Left cardiac atrium (tissue), 4 donors: ENCODE measurements at regions of chr10 and their contacts with region 1.

Region 1: GRCh38 chr10:88932539-88933256 is 19.9 kb downstream of the ACTA2 start:
- DNase-seq: peak; percentile 40
- ATAC-seq: peak; percentile 72 to 78

Region 2: DNA sequence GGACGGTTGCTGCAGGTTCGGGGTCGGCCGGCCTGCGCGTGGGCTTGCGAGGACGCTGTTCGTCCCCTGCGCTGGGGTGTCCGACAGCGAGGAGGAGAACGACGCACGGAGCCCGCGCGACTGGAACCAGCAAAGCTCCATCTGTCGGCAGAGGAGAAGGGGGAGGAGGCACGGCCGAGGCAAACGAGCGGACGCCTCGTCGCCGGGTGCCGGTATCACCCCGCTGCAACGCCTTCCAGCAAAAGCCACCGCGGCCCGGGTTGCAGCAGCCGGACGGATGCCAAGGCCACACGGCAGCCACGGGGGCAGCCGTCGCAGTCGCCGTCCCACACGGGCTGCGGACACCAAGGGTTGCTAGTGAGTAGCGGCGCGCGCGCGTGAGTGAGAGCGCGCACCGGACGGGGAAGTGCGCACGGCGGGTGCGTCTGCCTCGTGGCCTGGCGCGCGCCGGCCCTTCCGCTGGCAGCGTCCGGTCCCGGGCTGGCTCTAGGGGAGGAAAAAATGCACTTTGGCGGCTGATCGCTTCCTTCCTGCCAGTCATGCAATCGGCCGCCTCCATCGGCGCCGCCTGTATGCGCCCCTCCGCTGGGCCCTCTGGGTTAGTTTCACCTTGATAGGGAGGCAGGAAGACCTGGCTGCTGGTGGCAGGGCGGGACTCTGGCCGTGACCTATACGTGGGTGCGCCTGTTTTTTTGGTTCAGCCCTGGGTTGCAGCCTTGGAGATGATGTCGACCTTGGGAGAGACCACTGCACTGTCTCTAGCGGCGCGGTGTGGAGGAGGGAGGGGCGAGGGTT is 52.2 kb before region 1 on chr10:
- intact Hi-C with region 1: loop called in 1 of 2 experiments (anchors 5 kb)
- DNase-seq: peak; percentile 89
- ATAC-seq: peak; percentile 97 to 98

Region 3: DNA sequence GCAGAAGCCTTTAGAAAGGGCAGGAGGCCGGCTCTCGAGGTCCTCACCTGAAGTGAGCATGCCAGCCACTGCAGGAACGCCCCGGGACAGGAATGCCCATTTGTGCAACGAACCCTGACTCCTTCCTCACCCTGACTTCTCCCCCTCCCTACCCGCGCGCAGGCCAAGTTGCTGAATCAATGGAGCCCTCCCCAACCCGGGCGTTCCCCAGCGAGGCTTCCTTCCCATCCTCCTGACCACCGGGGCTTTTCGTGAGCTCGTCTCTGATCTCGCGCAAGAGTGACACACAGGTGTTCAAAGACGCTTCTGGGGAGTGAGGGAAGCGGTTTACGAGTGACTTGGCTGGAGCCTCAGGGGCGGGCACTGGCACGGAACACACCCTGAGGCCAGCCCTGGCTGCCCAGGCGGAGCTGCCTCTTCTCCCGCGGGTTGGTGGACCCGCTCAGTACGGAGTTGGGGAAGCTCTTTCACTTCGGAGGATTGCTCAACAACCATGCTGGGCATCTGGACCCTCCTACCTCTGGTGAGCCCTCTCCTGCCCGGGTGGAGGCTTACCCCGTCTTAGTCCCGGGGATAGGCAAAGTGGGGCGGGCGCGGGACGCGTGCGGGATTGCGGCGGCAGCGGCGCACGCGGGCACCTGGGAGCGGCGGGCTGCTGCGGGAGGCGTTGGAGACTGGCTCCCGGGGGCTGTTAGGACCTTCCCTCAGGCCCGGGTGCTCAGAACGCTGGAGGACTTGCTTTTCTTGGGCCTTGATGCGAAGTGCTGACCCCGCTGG is 57.9 kb after region 1 on chr10 and contains the start of gene FAS:
- intact Hi-C with region 1: loop called (anchors 2 to 5 kb)
- DNase-seq: peak; percentile 76
- ATAC-seq: peak; percentile 79 to 90
- total RNA-seq, gene FAS: 6.6 to 8.1 TPM

Region 4: DNA sequence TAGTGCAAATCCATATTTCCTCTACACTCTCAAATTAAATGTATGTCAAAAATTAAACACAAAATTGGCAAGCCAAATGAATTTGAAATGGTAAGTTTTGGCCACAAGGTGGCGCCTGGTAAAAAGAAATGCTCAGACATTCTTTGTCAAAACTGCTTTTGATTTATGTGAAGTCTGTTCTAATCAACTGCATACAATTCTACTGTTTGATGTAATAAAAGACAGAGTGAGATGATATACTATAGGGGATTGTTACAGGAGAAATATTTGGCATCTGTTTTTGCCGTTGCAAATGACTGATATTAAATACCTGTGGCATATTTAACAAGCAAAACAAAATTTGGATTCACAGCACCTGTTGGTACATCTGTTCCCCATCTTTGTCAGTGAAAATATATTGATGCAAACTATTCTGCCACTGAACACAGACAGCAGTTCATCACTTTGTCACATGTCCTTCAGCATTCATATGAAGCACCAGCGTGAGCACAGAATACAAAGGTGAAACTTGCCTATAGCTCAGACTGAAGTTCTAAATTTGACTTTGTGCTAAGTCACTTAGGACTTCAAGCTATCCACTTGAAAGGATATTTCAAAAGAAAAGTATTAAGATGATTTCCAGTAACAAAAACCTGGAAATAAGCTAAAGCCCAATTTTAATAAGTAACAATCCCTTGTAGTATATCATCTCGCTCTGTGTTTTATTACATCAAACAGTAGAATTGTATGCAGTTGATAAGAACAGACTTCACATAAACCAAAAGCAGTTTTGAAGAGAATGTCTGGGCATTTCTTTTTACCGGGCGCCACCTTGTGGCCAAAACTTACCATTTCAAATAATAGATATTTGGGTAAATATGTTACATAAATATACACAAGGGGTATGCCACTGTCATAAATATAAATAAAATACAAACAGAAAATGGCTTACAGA is 284.6 kb after region 1 on chr10:
- intact Hi-C with region 1: loop called (anchors 2 to 10 kb)
- DNase-seq: peak; percentile 56
- ATAC-seq: peak; percentile 39 to 45